MCF 10A (cell line): ENCODE measurements at regions of chr18 and their contacts with region 1.

Region 1: DNA sequence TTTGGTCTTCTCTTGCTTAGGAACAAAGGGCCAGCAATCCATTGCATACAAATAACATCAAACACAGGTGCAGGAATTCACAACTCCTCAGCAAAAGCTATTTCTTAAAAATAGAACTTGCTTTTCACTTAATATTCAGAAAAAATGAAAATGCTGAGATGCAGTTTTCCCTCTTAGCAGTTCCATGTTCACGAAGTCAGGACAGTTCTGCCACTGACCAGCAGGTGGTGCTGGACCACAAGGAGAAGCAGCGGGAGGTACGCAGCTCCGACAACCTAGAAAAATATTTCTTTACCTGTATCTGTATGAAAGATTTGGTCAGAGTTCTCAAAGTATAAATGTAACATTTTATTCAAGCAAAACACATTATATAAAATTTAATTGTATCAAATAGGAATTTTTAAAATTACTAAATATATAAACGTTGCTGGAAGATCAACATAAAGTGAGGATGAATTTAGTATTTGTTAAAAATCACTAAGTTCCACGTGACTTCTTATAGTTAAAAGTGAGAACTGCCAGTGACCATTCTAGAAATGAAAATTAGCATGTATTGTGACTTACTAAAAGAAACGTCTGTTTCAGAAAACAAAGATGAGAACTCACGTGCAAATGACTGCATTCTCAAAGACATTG is 48.8 kb downstream of the ADNP2 start:
- DNase-seq: peak; percentile 74
- H3K4me3 Mint-ChIP-seq: no peak overlapping the region
- H3K27ac Mint-ChIP-seq: no peak overlapping the region
- H3K4me1 Mint-ChIP-seq: no peaks in the 10 kb centered on the region
- H3K27me3 Mint-ChIP-seq: no peaks in the 10 kb centered on the region
- CTCF ChIP-seq: peak; percentile 92

Region 2: DNA sequence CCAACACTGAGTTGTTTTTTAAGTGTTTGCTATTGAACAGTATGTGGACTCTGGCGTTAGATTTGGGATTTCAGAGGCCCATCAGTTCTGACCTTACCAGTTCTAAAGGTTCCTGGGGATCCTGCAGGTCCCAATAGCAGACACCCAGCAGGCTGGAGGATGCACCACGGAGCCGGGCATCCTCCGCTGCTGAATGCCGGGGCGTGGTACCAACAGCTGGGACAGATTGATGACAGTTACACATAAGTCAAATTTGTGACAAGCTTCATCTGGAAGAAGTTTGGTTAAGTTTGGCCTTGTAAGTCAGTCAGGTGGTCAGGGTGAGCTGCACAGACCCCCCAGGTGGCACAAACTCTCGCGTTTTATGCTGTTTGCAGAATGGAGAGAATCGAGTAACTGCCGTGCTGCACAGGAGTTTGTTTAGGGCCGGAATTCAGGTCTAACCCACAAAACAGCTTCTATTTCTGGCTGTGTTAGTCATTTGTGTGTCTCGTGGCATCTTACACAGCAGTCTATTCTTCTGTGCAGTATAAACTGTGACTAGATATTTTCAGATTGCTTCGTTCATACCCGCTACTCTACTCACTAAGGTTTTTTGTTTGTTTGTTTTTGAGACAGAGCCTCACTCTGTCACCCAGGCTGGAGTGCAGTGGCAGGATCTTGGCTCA is 459.0 kb before region 1 on chr18:
- CTCF ChIA-PET with region 1: no interaction called
- POLR2A ChIA-PET with region 1: no interaction called
- intact Hi-C with region 1: no loop called
- DNase-seq: no peak
- H3K4me3 Mint-ChIP-seq: no peak overlapping the region
- H3K27ac Mint-ChIP-seq: no peak overlapping the region
- H3K4me1 Mint-ChIP-seq: no peaks in the 10 kb centered on the region
- H3K27me3 Mint-ChIP-seq: no peaks in the 10 kb centered on the region
- CTCF ChIP-seq: no peak

Region 3: GRCh38 chr18:80034068-80034851 is 123.6 kb before region 1 on chr18 and contains the start of gene RBFA:
- CTCF ChIA-PET with region 1: no interaction called
- POLR2A ChIA-PET with region 1: no interaction called
- intact Hi-C with region 1: loop called (anchors 5 kb)
- DNase-seq: peak; percentile 96
- H3K4me3 Mint-ChIP-seq: peak within 1 kb of the TSS; percentile 92
- H3K27ac Mint-ChIP-seq: peak within 1 kb of the TSS; percentile 100
- H3K4me1 Mint-ChIP-seq: peaks cover 23% of the 10 kb centered on the region
- H3K27me3 Mint-ChIP-seq: no peaks in the 10 kb centered on the region
- CTCF ChIP-seq: peak; percentile 49
- total RNA-seq, gene RBFA: 38.2 and 47.4 TPM in 2 replicates

Region 4: DNA sequence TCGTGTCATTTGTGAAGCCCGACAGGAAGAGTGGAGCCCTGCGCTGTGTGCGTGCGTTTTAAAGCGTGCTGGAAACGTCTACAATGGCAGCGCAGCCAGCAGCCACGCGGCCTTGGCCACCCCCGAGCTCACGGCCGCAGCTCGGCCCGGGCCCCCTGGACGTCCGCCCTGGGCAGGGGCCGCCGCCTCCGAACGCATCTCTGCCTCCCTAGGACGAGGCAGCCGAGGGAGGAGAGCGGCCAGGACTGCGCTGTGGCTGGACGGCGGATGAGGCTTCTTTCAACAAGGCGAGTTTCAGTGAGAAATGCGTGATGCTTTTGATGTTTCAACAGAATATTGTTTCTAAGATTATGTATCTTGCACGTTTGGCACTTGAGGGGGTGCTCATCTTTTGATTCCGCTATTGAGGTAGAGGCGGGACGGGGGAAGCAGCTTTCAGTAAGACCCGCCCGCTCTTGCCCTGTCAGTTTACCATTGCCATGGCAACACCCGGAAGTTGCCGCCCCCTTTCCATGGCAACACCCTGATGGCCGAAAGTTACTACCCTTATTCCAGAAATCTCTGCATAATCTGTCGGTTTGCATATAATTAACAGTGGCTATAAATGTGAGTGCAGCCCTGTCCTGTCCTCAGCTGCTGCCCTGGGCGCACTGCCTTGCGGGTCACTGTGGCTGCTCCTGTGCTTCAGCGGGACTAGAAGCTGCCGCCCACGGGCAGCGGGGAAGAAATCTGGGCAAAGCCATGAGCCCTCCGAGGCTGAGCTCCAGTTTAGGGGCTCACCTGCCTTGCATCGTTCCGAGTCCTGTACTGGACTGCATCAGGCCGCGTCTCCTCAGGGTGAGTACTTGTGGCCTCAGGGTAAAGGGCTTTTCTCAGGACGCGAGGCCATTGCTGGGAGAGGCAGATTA is 10.2 kb before region 1 on chr18:
- CTCF ChIA-PET with region 1: interaction called, 10 read pairs
- POLR2A ChIA-PET with region 1: interaction called, 6 read pairs
- intact Hi-C with region 1: no loop called
- DNase-seq: peak; percentile 79
- H3K4me3 Mint-ChIP-seq: peak overlapping the region; percentile 73
- H3K27ac Mint-ChIP-seq: peak overlapping the region; percentile 76
- H3K4me1 Mint-ChIP-seq: no peaks in the 10 kb centered on the region
- H3K27me3 Mint-ChIP-seq: no peaks in the 10 kb centered on the region
- CTCF ChIP-seq: no peak

Region 5: GRCh38 chr18:80171054-80171872 is 13.4 kb after region 1 on chr18:
- CTCF ChIA-PET with region 1: interaction called, 32 read pairs
- POLR2A ChIA-PET with region 1: interaction called, 4 read pairs
- intact Hi-C with region 1: no loop called
- DNase-seq: peak; percentile 54
- H3K4me3 Mint-ChIP-seq: peak overlapping the region; percentile 5
- H3K27ac Mint-ChIP-seq: peak overlapping the region; percentile 23
- H3K4me1 Mint-ChIP-seq: peaks cover 21% of the 10 kb centered on the region
- H3K27me3 Mint-ChIP-seq: no peaks in the 10 kb centered on the region
- CTCF ChIP-seq: peak; percentile 95

Region 6: GRCh38 chr18:80179857-80180551 is 22.2 kb after region 1 on chr18:
- CTCF ChIA-PET with region 1: interaction called, 12 read pairs
- POLR2A ChIA-PET with region 1: interaction called, 3 read pairs
- intact Hi-C with region 1: no loop called
- DNase-seq: peak; percentile 44
- H3K4me3 Mint-ChIP-seq: peak overlapping the region; percentile 6
- H3K27ac Mint-ChIP-seq: no peak overlapping the region
- H3K4me1 Mint-ChIP-seq: peaks cover 22% of the 10 kb centered on the region
- H3K27me3 Mint-ChIP-seq: no peaks in the 10 kb centered on the region
- CTCF ChIP-seq: no peak

Region 7: DNA sequence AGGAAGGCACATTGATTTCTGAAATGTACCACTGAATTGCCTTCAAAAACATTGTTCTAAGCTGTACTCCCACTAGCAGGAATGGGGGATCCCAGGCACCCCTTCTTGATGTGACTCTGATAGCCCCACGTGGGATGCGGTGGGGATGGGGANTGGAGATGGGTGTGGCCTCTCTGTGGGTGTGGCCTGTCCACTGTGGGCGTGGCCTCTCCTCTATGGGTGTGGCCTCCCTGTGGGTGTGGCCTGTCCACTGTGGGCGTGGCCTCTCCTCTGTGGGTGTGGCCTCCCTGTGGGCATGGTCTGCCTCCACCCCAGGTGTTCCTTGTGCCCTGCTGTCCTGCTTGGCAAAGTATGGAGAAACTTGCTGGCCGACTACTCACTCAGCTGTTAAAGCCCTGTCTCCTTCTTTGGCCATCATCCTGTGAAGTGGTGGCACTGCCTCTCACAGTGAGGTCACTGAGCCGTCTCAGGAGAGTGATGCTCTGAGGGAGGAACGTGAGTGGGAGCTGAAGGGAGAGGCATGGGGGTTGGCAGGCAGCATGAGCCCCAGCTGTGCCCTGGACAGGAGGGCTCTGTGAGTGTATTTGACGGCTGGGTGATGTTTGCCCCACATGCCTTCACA is 96.2 kb after region 1 on chr18:
- CTCF ChIA-PET with region 1: interaction called, 78 read pairs
- POLR2A ChIA-PET with region 1: interaction called, 7 read pairs
- intact Hi-C with region 1: no loop called
- DNase-seq: peak; percentile 35
- H3K4me3 Mint-ChIP-seq: no peak overlapping the region
- H3K27ac Mint-ChIP-seq: no peak overlapping the region
- H3K4me1 Mint-ChIP-seq: peaks cover 27% of the 10 kb centered on the region
- H3K27me3 Mint-ChIP-seq: no peaks in the 10 kb centered on the region
- CTCF ChIP-seq: no peak

Region 8: GRCh38 chr18:80259610-80260009 is 101.8 kb after region 1 on chr18:
- CTCF ChIA-PET with region 1: interaction called, 78 read pairs
- POLR2A ChIA-PET with region 1: interaction called, 6 read pairs
- intact Hi-C with region 1: no loop called
- DNase-seq: no peak
- H3K4me3 Mint-ChIP-seq: no peak overlapping the region
- H3K27ac Mint-ChIP-seq: no peak overlapping the region
- H3K4me1 Mint-ChIP-seq: peaks cover 18% of the 10 kb centered on the region
- H3K27me3 Mint-ChIP-seq: no peaks in the 10 kb centered on the region
- CTCF ChIP-seq: no peak